Spleen (tissue), 13 donors: ENCODE measurements at regions of chr1 and their contacts with region 1.

Region 1: DNA sequence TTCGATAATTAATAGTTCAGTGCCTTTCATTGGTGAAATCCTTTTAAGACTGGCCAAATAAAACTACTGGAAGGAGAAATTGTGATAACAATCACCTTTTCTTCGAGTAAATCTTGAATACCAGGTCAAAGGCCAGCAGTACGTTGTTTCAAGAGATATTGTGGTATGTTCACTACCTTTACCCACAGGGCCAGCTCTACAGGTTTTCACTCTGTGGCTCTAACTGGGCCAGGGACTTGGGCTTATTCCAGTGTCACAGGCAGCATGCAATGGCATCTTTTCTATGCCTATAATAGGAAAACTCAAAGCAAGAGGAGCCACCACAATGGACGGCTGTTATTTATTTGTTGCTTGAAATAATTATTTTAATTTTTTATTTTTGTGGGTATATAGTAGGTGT is 26.8 kb upstream of the LRIF1 start:
- DNase-seq: no peak
- H3K4me3 ChIP-seq: no peak overlapping the region
- H3K27ac ChIP-seq: no peak overlapping the region
- H3K4me1 ChIP-seq: peaks cover 0 to 3% (median 0%) of the 10 kb centered on the region in 6 donors
- H3K27me3 ChIP-seq: peaks cover 0 to 4% (median 0%) of the 10 kb centered on the region in 7 donors
- CTCF ChIP-seq: no peak
- POLR2A ChIP-seq: no peak

Region 2: GRCh38 chr1:110780600-110781484 is 209.7 kb before region 1 on chr1:
- intact Hi-C with region 1: loop called (anchors 10 kb)
- DNase-seq: peak; percentile 78
- H3K4me3 ChIP-seq: no peak overlapping the region
- H3K27ac ChIP-seq: no peak overlapping the region
- H3K4me1 ChIP-seq: peaks cover 3 to 37% (median 18%) of the 10 kb centered on the region in 6 donors
- H3K27me3 ChIP-seq: peaks cover 0 to 8% (median 0%) of the 10 kb centered on the region in 7 donors
- CTCF ChIP-seq: peak; percentile 58 to 87 (median 82)
- POLR2A ChIP-seq: no peak

Region 3: GRCh38 chr1:110903853-110904484 is 86.6 kb before region 1 on chr1:
- intact Hi-C with region 1: no loop called
- DNase-seq: no peak
- H3K4me3 ChIP-seq: no peak overlapping the region
- H3K27ac ChIP-seq: peak overlapping the region in 1 of 8 donors; percentile 51
- H3K4me1 ChIP-seq: peaks cover 0 to 1% (median 0%) of the 10 kb centered on the region in 6 donors
- H3K27me3 ChIP-seq: no peaks in the 10 kb centered on the region
- CTCF ChIP-seq: no peak
- POLR2A ChIP-seq: no peak

Region 4: DNA sequence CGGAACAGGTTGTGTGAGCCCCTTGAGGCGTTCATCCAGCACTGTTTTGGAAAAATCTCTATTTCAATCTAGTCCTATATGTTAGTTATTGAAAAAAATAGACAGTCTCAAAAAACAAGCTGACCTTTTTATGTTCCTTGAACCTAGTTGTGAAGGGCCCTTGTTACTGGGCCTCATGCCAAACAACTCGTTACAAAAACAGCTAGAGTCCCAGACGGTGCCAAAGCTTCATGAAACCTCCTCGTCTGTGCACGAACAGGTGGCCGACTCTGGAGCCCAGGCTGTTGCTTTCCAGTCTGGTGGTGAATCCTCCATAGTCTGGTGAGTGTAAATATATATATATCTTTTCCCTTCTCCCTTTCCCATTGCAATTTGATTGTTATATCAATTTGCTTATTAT is 300.1 kb after region 1 on chr1 and contains the start of gene CHIA:
- intact Hi-C with region 1: no loop called
- DNase-seq: no peak
- H3K4me3 ChIP-seq: no peak within 1 kb of the TSS
- H3K27ac ChIP-seq: no peak within 1 kb of the TSS
- H3K4me1 ChIP-seq: no peaks in the 10 kb centered on the region
- H3K27me3 ChIP-seq: peaks cover 0 to 2% (median 0%) of the 10 kb centered on the region in 7 donors
- CTCF ChIP-seq: no peak
- POLR2A ChIP-seq: no peak
- total RNA-seq, gene CHIA: not detected

Region 5: DNA sequence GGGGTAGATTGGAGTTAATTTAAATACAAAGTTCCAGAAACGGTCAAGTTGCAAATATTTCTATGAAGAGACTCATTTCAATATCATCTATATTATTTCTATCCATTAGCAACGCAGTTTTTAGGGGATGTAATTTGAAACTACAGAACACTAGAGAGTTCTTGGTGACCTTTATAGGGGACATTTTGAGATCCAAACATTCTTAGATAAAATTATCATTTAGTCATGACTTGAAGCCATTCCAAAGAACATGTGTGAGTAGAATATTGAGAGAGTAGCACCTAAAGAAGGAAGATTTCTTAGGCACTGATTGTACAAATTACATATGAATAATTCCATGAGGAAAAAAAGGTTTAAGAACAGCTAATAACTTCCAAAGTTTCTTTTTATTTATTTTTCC is 319.2 kb after region 1 on chr1:
- intact Hi-C with region 1: no loop called
- DNase-seq: no peak
- H3K4me3 ChIP-seq: no peak overlapping the region
- H3K27ac ChIP-seq: no peak overlapping the region
- H3K4me1 ChIP-seq: no peaks in the 10 kb centered on the region
- H3K27me3 ChIP-seq: no peaks in the 10 kb centered on the region
- CTCF ChIP-seq: no peak
- POLR2A ChIP-seq: no peak